HEK293T (cell line): ENCODE measurements at regions of chr22 and their contacts with region 1.

Region 1: DNA sequence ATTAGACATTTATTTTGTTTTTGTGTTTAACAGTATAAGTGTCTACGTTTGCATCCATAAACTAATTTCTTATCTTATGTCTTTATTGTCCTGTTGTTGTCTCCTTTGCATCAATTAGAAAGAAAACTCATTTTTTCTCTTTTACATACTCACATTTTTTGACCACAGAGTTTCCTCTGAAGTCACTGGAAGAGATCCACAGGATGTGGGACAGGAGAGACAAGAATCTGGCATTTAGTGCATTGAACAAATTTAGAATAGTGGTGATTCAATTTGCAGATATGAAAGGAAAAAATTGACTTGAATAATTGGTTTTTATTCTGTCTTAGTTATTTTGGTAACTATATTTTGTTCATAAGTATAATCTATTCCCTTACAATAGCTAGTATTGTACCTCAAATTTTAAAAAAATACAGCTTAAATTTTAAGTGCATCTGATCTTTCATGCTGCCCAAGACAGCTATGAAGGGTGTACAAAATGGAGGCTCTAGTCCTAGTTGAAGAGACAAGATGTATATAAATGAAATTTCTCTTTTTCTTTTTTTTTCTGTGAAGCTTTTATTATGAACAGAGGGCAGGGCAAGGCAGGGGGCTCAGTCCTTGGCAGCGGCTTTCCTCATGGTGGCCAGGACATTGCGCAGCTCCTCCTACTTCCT is 24.4 kb downstream of the HORMAD2 start:
- DNase-seq: no peak

Region 2: GRCh38 chr22:30116362-30117117 is 11.9 kb after region 1 on chr22:
- CTCF ChIA-PET with region 1: interaction called, 10 read pairs
- POLR2A ChIA-PET with region 1: no interaction called
- DNase-seq: no peak

Region 3: DNA sequence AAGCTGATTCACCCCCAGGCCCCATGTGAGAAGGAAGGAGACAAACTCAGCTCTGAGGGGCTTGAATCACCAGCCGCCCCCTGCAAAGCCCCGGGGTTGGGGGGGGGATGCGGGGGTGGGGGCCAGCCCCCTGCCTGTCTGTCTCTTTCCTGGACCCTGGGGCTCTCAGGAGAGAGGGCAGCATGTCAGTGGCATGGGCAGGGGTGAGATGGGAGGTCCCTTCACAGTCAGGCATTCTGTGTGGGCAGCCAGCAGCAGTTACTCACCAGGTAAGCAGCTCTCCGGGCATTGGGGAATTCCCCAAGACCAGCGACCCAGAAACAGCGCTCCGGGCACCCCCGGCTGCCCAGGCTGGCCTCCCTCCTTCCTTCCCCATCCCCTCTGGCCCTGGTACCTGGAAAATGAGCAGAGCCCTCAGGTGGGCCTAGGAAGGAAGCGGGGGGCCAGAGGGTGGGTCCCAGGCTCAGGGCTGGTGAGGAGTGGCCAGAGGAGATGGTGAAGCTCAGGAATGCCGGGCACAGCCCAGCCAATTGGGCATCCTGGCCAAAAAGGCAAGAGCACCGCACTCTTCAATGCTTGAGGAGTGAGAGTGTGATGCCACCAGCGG is 146.1 kb after region 1 on chr22:
- CTCF ChIA-PET with region 1: interaction called, 29 read pairs
- POLR2A ChIA-PET with region 1: no interaction called
- DNase-seq: no peak